ENCODE measurements at regions of chr12 and their contacts with region 1.

Region 1: GRCh38 chr12:49232940-49233841 is 31.7 kb upstream of the TUBA1C start:
- DNase-seq: no peak
- H3K4me3 Mint-ChIP-seq: peak overlapping the region; percentile 84
- H3K27ac Mint-ChIP-seq: peak overlapping the region; percentile 77
- H3K4me1 Mint-ChIP-seq: peaks cover 25% of the 10 kb centered on the region
- H3K27me3 Mint-ChIP-seq: no peaks in the 10 kb centered on the region

Region 2: DNA sequence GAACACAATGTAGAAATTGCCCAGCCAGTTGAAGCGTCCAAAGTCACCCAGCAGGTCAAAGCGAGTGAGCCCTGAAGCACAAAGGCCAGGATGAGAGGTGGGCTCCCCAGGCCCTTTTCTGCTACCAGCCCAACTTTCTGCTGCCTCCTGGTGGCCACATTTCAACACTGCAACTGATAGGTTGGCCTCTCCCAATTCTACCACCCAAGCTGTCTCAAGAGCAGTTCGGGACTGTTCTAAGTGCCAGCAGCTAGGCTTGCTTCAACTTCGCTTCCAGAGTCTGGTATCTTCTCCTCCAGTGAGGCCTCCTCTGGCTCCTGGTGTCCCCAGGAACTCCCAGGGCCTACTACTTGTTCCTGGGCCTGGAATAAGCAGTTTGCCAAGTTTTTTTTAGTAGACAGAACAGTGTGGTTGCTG is 135.1 kb before region 1 on chr12:
- CTCF ChIA-PET with region 1: interaction called, 12 read pairs
- POLR2A ChIA-PET with region 1: no interaction called
- DNase-seq: peak; percentile 69
- H3K4me3 Mint-ChIP-seq: no peak overlapping the region
- H3K27ac Mint-ChIP-seq: no peak overlapping the region
- H3K4me1 Mint-ChIP-seq: peaks cover 18% of the 10 kb centered on the region
- H3K27me3 Mint-ChIP-seq: peaks cover 27% of the 10 kb centered on the region

Region 3: GRCh38 chr12:49244176-49244575 is 11.0 kb after region 1 on chr12:
- CTCF ChIA-PET with region 1: interaction called, 23 read pairs
- POLR2A ChIA-PET with region 1: no interaction called
- DNase-seq: no peak
- H3K4me3 Mint-ChIP-seq: no peak overlapping the region
- H3K27ac Mint-ChIP-seq: no peak overlapping the region
- H3K4me1 Mint-ChIP-seq: no peaks in the 10 kb centered on the region
- H3K27me3 Mint-ChIP-seq: no peaks in the 10 kb centered on the region

Region 4: DNA sequence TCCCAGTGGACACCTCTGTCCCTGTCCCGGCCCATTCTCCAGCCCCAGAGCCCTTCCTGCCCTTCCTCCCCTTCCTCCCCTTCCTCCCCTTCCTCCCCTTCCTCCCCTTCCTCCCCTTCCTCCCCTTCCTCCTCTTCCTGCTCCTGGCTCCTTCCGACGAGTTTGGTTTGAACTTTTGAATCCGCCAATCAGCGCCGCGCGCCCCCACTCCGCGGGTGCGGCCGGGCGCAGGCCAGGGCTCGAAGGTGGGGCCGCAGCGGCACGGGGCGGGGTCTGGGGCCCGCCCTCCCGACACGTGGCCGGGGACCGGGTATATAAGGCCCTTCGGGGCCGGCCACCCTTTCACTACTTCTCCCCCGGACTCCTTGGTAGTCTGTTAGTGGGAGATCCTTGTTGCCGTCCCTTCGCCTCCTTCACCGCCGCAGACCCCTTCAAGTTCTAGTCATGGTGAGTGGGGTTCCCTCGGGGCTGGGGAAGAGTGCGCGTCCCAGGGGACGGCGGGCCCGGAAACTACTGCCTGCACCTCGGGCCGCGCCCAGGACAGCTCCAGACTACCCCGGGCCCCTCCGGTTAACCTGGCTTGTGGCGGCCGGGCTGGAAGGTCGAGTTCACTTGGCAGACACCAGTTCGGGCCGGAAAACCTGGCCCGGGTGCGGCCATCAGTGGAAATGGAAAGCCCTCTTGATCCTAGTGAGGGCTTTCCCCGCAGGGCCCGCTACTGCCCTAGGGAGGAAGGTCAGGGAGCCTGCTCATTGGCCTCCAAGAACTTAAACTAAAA is 31.7 kb after region 1 on chr12 and contains the start of gene TUBA1C:
- CTCF ChIA-PET with region 1: interaction called, 10 read pairs
- POLR2A ChIA-PET with region 1: no interaction called
- DNase-seq: peak; percentile 92
- H3K4me3 Mint-ChIP-seq: peak within 1 kb of the TSS; percentile 98
- H3K27ac Mint-ChIP-seq: peak within 1 kb of the TSS; percentile 99
- H3K4me1 Mint-ChIP-seq: peaks cover 52% of the 10 kb centered on the region
- H3K27me3 Mint-ChIP-seq: no peaks in the 10 kb centered on the region
- total RNA-seq, gene TUBA1C: 246 to 278 TPM